ENCODE measurements at regions of chr3 and their contacts with region 1.

Region 1: DNA sequence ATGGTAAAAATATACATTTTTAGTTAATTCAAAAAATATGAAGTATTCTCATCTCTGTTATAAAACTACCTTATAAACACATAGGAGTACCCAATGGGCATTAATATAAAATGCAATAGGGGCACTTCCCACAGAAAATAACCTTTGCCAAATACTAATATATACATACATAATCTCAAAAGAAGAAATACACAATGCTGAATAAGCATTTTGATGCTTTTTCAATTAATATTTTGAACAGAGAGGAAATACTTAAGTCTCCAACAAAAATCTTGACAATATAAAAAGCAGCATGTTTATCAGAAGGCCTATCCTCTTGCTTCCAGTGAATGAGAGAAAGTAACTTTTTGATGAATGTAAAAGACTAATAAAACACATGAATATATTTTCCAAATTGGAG is 110.7 kb downstream of the ROBO1 start:
- DNase-seq: no peak
- H3K4me3 ChIP-seq: no peak overlapping the region
- H3K27ac ChIP-seq: no peak overlapping the region
- H3K4me1 ChIP-seq: no peaks in the 10 kb centered on the region
- H3K27me3 ChIP-seq: no peaks in the 10 kb centered on the region
- CTCF ChIP-seq: no peak
- EP300 ChIP-seq: no peak
- POLR2A ChIP-seq: no peak

Region 2: GRCh38 chr3:79063624-79064023 is 593.5 kb before region 1 on chr3:
- in situ Hi-C with region 1: no loop called
- intact Hi-C with region 1: loop called (anchors 5 kb)
- DNase-seq: no peak
- H3K4me3 ChIP-seq: no peak overlapping the region
- H3K27ac ChIP-seq: no peak overlapping the region
- H3K4me1 ChIP-seq: no peaks in the 10 kb centered on the region
- H3K27me3 ChIP-seq: no peaks in the 10 kb centered on the region
- CTCF ChIP-seq: no peak
- EP300 ChIP-seq: no peak
- POLR2A ChIP-seq: no peak

Region 3: GRCh38 chr3:79598594-79598993 is 58.5 kb before region 1 on chr3:
- in situ Hi-C with region 1: no loop called
- intact Hi-C with region 1: no loop called
- DNase-seq: no peak
- H3K4me3 ChIP-seq: no peak overlapping the region
- H3K27ac ChIP-seq: no peak overlapping the region
- H3K4me1 ChIP-seq: no peaks in the 10 kb centered on the region
- H3K27me3 ChIP-seq: no peaks in the 10 kb centered on the region
- CTCF ChIP-seq: no peak
- EP300 ChIP-seq: no peak
- POLR2A ChIP-seq: no peak